Heart left ventricle (tissue), 16 donors: ENCODE measurements at regions of chr7 and their contacts with region 1.

Region 1: DNA sequence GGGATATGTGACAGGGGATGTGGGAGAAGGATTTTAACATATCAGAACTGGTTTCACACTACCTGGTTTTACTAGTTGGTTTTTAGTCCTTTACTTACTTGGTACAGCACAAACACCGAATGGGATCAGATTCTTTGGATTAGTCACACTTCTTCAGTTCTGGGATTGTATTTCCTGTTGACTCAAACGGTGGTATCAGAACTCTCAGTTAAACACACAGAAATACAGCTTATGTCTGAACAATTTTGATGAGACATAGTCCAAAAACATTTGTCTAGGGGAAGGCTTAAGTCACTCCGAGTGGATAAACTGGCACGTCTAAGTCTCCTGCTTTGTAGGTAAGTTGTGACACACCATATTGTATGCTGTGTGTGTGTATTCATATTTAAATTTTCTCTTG is 480.5 kb downstream of the PHTF2 start:
- DNase-seq: no peak
- ATAC-seq: no peak
- H3K4me3 ChIP-seq: no peak overlapping the region
- H3K27ac ChIP-seq: no peak overlapping the region
- H3K4me1 ChIP-seq: no peaks in the 10 kb centered on the region
- H3K27me3 ChIP-seq: no peaks in the 10 kb centered on the region
- CTCF ChIP-seq: no peak
- POLR2A ChIP-seq: no peak

Region 2: GRCh38 chr7:78218051-78218450 is 61.0 kb before region 1 on chr7:
- intact Hi-C with region 1: loop called in 1 of 10 experiments (anchors 10 kb)
- DNase-seq: no peak
- ATAC-seq: no peak
- H3K4me3 ChIP-seq: no peak overlapping the region
- H3K27ac ChIP-seq: no peak overlapping the region
- H3K4me1 ChIP-seq: no peaks in the 10 kb centered on the region
- H3K27me3 ChIP-seq: no peaks in the 10 kb centered on the region
- CTCF ChIP-seq: no peak
- POLR2A ChIP-seq: no peak